Activated CD4-positive, alpha-beta T cell treated with anti-CD3 and anti-CD28 coated beads, Interleukin-2, amount 10 ng/mL, durations not matched to agents 24 days and 14 days (primary cell): ENCODE measurements at regions of chr4 and their contacts with region 1.

Region 1: GRCh38 chr4:89226665-89227574 is 80.7 kb downstream of the GPRIN3 start:
- DNase-seq: peak; percentile 93
- H3K4me3 Mint-ChIP-seq: no peak overlapping the region
- H3K27ac Mint-ChIP-seq: peak overlapping the region; percentile 49
- H3K4me1 Mint-ChIP-seq: peaks cover 14% of the 10 kb centered on the region
- H3K27me3 Mint-ChIP-seq: no peaks in the 10 kb centered on the region

Region 2: GRCh38 chr4:89158884-89159503 is 67.9 kb before region 1 on chr4:
- intact Hi-C with region 1: loop called (anchors 2 kb)
- DNase-seq: no peak
- H3K4me3 Mint-ChIP-seq: no peak overlapping the region
- H3K27ac Mint-ChIP-seq: no peak overlapping the region
- H3K4me1 Mint-ChIP-seq: no peaks in the 10 kb centered on the region
- H3K27me3 Mint-ChIP-seq: peaks cover 24% of the 10 kb centered on the region

Region 3: DNA sequence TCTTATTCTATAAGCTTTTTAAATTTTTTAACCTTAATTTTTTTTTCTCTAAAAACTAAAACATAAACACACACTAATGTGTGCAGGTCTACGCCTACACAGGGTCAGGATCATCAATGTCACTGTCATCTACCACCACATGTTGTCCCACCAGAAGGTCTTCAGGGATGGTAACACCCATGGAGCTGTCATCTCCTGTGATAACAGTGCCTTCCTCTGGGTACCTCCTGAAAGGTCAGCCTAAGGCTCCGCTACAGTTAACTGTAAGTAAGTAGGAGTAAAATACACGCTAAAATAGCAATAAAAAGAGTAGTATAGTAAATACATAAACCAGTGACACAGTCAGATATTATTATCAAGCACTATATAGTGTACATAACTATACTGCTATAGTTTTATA is 126.6 kb after region 1 on chr4:
- intact Hi-C with region 1: loop called (anchors 5 kb)
- DNase-seq: no peak
- H3K4me3 Mint-ChIP-seq: no peak overlapping the region
- H3K27ac Mint-ChIP-seq: no peak overlapping the region
- H3K4me1 Mint-ChIP-seq: no peaks in the 10 kb centered on the region
- H3K27me3 Mint-ChIP-seq: peaks cover 10% of the 10 kb centered on the region

Region 4: DNA sequence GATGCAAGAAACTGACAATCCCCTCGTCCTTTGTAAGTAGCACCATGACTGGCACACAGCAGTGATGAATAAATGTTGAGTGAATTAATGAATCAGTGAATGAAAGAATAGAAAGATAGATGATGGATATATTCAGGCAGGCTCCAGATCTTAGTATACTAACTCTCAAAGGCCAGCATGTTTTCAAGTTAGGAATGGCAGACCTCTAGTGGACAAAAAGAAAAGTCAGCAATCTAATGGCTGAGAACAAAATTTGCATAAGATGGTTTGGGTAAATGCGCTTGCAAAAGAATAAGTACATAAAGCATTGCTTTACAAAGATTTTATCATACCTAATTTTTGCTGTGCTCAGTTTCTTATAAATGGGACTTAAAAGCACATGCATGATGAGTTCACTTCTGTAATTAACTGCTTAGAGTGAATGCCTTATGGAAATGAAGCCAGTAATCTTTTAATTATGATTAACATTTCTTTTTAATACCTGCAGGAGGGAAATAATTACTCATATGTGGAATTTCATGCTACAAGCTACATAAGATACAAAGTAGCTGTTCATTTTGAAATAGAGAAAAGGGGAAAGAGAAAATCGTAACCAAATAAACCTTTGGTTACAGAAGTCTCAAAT is 207.6 kb after region 1 on chr4:
- intact Hi-C with region 1: loop called (anchors 1 kb)
- DNase-seq: peak; percentile 71
- H3K4me3 Mint-ChIP-seq: no peak overlapping the region
- H3K27ac Mint-ChIP-seq: no peak overlapping the region
- H3K4me1 Mint-ChIP-seq: peaks cover 22% of the 10 kb centered on the region
- H3K27me3 Mint-ChIP-seq: peaks cover 3% of the 10 kb centered on the region

Region 5: GRCh38 chr4:89509708-89510281 is 282.9 kb after region 1 on chr4:
- intact Hi-C with region 1: loop called (anchors 5 kb)
- DNase-seq: peak; percentile 80
- H3K4me3 Mint-ChIP-seq: no peak overlapping the region
- H3K27ac Mint-ChIP-seq: no peak overlapping the region
- H3K4me1 Mint-ChIP-seq: peaks cover 15% of the 10 kb centered on the region
- H3K27me3 Mint-ChIP-seq: peaks cover 38% of the 10 kb centered on the region

Region 6: GRCh38 chr4:89836897-89837384 is 610.0 kb after region 1 on chr4 and contains the start of gene SNCA:
- intact Hi-C with region 1: loop called (anchors 5 kb)
- DNase-seq: peak; percentile 77
- H3K4me3 Mint-ChIP-seq: peak within 1 kb of the TSS; percentile 83
- H3K27ac Mint-ChIP-seq: no peak within 1 kb of the TSS
- H3K4me1 Mint-ChIP-seq: peaks cover 22% of the 10 kb centered on the region
- H3K27me3 Mint-ChIP-seq: peaks cover 70% of the 10 kb centered on the region
- total RNA-seq, gene SNCA: 0.19 and 0.23 TPM in 2 replicates

Region 7: GRCh38 chr4:89906777-89907521 is 680.0 kb after region 1 on chr4:
- intact Hi-C with region 1: loop called (anchors 10 kb)
- DNase-seq: no peak
- H3K4me3 Mint-ChIP-seq: no peak overlapping the region
- H3K27ac Mint-ChIP-seq: no peak overlapping the region
- H3K4me1 Mint-ChIP-seq: no peaks in the 10 kb centered on the region
- H3K27me3 Mint-ChIP-seq: peaks cover 28% of the 10 kb centered on the region